ENCODE measurements at regions of chr1 and their contacts with region 1.

Region 1: GRCh38 chr1:180291004-180291403 is 60.9 kb downstream of the LHX4 start:
- DNase-seq: no peak
- ATAC-seq: no peak
- H3K4me3 ChIP-seq: no peak overlapping the region
- H3K4me3 Mint-ChIP-seq: no peak overlapping the region
- H3K27ac ChIP-seq: no peak overlapping the region
- H3K27ac Mint-ChIP-seq: peak overlapping the region; percentile 3 to 26
- H3K4me1 ChIP-seq: peaks cover 0 to 7% of the 10 kb centered on the region in 2 experiments
- H3K4me1 Mint-ChIP-seq: peaks cover 28 to 34% (median 31%) of the 10 kb centered on the region in 3 donors
- H3K27me3 ChIP-seq: no peaks in the 10 kb centered on the region
- H3K27me3 Mint-ChIP-seq: no peaks in the 10 kb centered on the region

Region 2: GRCh38 chr1:180278596-180279395 is 12.2 kb before region 1 on chr1:
- CTCF ChIA-PET with region 1: no interaction called
- POLR2A ChIA-PET with region 1: interaction called in 1 of 2 experiments, 11 read pairs
- DNase-seq: no peak
- ATAC-seq: no peak
- H3K4me3 ChIP-seq: no peak overlapping the region
- H3K4me3 Mint-ChIP-seq: no peak overlapping the region
- H3K27ac ChIP-seq: no peak overlapping the region
- H3K27ac Mint-ChIP-seq: no peak overlapping the region
- H3K4me1 ChIP-seq: no peaks in the 10 kb centered on the region
- H3K4me1 Mint-ChIP-seq: no peaks in the 10 kb centered on the region
- H3K27me3 ChIP-seq: no peaks in the 10 kb centered on the region
- H3K27me3 Mint-ChIP-seq: no peaks in the 10 kb centered on the region

Region 3: DNA sequence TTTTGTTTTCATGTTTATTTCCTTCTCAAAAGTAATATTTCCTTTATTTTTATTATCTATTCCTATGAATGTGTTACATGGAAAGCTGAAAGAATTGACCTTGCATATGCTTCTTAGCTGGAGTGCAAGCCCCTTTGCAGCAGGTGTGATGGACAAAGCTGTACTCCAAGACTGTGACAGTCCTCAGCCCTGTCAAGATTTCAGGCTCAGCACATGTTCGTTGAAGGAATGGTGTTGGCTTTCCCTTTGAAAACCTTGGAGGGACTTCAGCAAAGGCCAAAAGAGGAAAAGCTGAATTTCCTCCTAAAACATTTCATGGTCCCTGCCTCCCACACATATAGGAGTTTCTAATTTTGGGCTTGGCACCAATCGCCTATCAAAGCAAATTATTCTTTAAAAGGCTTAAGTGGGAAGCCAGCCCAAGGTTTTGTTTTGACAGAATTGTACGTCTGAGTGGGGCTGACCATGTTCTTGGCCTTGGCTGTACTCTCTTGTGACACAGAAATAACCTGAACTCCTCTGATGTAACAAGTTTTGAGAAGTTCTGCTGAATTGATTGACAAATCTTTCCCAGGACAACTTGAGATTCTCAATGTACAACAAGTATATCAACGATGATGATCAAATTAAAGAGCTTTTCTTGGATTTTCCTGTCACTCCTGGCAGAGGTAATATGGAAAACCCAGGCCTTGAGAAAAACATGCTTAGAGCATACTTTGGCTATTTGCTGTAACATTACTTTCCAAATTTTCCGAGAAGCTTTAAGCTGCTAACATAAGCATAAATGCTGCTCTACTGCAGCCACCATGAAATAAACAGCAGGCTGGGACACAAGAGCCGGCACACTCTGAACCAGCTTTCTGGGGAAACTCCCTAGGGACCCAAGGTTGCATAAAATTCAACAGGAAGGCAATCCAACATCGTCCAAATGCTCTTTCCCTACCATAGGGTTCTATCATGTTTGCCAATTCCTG is 1906.2 kb after region 1 on chr1:
- CTCF ChIA-PET with region 1: no interaction called
- POLR2A ChIA-PET with region 1: interaction called in 1 of 2 experiments, 12 read pairs
- DNase-seq: no peak
- ATAC-seq: no peak
- H3K4me3 ChIP-seq: no peak overlapping the region
- H3K4me3 Mint-ChIP-seq: no peak overlapping the region
- H3K27ac ChIP-seq: no peak overlapping the region
- H3K27ac Mint-ChIP-seq: no peak overlapping the region
- H3K4me1 ChIP-seq: no peaks in the 10 kb centered on the region
- H3K4me1 Mint-ChIP-seq: no peaks in the 10 kb centered on the region
- H3K27me3 ChIP-seq: no peaks in the 10 kb centered on the region
- H3K27me3 Mint-ChIP-seq: peaks cover under 1 to 4% of the 10 kb centered on the region in 2 donors

Measured in T-cell (primary cell).